ENCODE measurements at regions of chr9 and their contacts with region 1.

Region 1: DNA sequence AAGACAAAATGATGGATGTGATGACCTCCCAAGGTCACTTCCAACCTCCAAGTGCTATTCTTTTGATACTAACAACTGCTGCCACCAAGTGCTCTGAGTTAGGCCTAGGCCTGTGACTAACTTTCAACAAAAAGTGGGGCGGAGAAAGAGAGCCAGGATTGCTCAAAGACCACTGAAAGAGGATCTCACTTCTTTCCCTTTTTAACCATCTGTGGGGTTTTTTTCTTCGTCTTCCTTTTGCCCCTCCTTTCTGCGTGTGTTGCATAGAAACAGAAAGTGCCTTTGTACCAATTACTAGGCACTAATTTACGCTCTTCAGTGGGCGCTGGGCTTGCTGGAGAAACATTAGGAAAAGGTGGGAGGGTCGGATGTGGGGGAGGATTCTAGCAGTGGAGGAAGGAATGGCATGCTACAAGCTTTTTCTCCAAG is 8.0 kb downstream of the KLF9 start:
- DNase-seq: peak; percentile 75
- H3K4me3 Mint-ChIP-seq: peak overlapping the region; percentile 76
- H3K27ac Mint-ChIP-seq: peak overlapping the region; percentile 96
- H3K4me1 Mint-ChIP-seq: peaks cover 78% of the 10 kb centered on the region
- H3K27me3 Mint-ChIP-seq: no peaks in the 10 kb centered on the region

Region 2: GRCh38 chr9:69822091-69822750 is 584.2 kb before region 1 on chr9:
- CTCF ChIA-PET with region 1: no interaction called
- intact Hi-C with region 1: loop called (anchors 10 kb)
- DNase-seq: no peak
- H3K4me3 Mint-ChIP-seq: no peak overlapping the region
- H3K27ac Mint-ChIP-seq: no peak overlapping the region
- H3K4me1 Mint-ChIP-seq: peaks cover 27% of the 10 kb centered on the region
- H3K27me3 Mint-ChIP-seq: peaks cover 19% of the 10 kb centered on the region

Region 3: DNA sequence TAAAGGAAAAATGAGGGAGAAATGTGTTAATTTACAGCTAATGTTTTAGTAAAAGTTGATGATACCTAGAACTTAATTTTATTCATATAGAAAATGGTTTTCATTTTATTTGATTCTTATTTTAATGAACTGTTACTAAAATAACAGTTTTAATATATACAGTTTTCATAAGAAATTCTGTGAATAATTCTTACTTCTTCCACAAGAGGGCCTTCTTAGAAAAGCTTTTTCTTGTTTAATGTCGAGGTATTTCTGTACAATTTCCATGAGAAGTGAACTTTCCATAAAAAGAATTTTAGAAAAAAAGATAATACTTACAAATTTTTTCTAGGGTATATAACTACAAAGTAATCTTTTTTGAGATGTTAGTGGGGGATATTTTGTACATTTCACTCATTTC is 65.9 kb before region 1 on chr9:
- CTCF ChIA-PET with region 1: interaction called, 5 read pairs
- intact Hi-C with region 1: loop called (anchors 1 kb)
- DNase-seq: no peak
- H3K4me3 Mint-ChIP-seq: no peak overlapping the region
- H3K27ac Mint-ChIP-seq: no peak overlapping the region
- H3K4me1 Mint-ChIP-seq: no peaks in the 10 kb centered on the region
- H3K27me3 Mint-ChIP-seq: no peaks in the 10 kb centered on the region

Region 4: GRCh38 chr9:70392189-70392588 is 14.3 kb before region 1 on chr9:
- CTCF ChIA-PET with region 1: interaction called, 21 read pairs
- intact Hi-C with region 1: no loop called
- DNase-seq: peak; percentile 24
- H3K4me3 Mint-ChIP-seq: no peak overlapping the region
- H3K27ac Mint-ChIP-seq: peak overlapping the region; percentile 32
- H3K4me1 Mint-ChIP-seq: peaks cover 78% of the 10 kb centered on the region
- H3K27me3 Mint-ChIP-seq: no peaks in the 10 kb centered on the region

Region 5: GRCh38 chr9:70492319-70492777 is 85.9 kb after region 1 on chr9:
- CTCF ChIA-PET with region 1: no interaction called
- intact Hi-C with region 1: no loop called
- DNase-seq: no peak
- H3K4me3 Mint-ChIP-seq: no peak overlapping the region
- H3K27ac Mint-ChIP-seq: no peak overlapping the region
- H3K4me1 Mint-ChIP-seq: peaks cover 17% of the 10 kb centered on the region
- H3K27me3 Mint-ChIP-seq: peaks cover 4% of the 10 kb centered on the region

Region 6: DNA sequence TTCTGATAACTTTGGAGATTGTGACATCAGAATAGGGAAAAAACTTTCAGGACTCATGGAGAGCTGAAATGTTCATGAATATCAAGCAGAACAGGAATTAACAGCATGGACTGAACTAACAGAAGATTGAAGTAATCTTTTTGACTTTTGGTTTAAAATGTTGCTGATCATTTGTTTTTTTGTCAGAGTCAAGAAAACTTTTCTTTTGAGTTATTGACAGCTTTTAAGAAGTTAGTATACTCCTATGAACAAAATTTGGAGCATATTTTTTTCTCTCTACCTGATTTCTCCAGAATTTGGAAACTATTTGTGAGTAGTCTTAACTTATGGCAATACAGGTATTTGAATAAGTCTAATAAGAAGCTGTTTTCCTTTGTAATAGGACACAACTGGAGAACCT is 252.3 kb after region 1 on chr9:
- CTCF ChIA-PET with region 1: no interaction called
- intact Hi-C with region 1: no loop called
- DNase-seq: no peak
- H3K4me3 Mint-ChIP-seq: no peak overlapping the region
- H3K27ac Mint-ChIP-seq: no peak overlapping the region
- H3K4me1 Mint-ChIP-seq: no peaks in the 10 kb centered on the region
- H3K27me3 Mint-ChIP-seq: peaks cover 14% of the 10 kb centered on the region

Measured in activated naive CD4-positive, alpha-beta T cell treated with anti-CD3 and anti-CD28 coated beads for 36 hours (primary cell).